Right ventricle myocardium superior (tissue), 1 donor: ENCODE measurements at regions of chr6 and their contacts with region 1.

Region 1: GRCh38 chr6:156564127-156564806 is 212.9 kb upstream of the ARID1B start:
- DNase-seq: peak; percentile 87
- ATAC-seq: peak; percentile 97

Region 2: DNA sequence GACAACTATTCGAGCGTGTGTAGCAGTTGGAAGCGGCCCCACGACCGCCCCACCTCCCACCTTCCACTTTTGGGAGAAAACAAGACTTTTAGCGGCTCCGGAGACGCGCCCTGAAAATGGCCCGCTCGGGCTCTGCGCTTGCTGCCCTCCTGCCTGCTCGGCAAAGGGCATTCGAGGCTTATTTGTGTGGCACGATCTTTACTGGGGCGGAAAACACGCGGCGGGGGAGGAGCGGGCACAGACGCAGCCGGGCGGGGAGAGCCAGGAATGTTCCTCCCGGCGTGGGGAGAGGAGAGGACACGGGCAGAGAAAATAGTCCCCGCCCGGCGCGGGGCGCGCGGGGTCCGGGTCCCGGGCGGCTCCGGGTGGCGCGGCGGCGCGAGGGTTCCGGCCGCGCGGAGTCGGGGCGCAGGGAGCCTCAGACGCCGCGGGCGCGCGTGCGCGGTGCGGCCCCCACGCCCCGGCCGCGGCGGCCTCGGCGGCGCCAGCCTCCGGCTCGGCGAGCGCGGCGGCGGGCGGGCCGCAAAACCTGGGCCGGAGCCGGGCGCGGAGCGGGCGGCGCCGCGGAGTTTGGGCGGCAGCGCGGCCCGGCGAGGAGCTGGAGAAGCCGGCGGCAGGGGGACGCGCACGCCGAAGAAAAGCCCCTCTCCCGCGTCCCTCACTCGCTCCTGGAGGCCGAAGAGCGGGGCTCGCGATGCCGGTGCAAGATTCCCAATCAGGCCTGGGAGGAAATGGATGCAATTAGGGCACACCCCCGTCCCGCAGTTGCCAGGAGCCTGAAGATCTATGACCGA is 122.9 kb after region 1 on chr6:
- intact Hi-C with region 1: loop called (anchors 5 kb)
- DNase-seq: peak; percentile 94
- ATAC-seq: peak; percentile 95

Region 3: GRCh38 chr6:156953479-156954146 is 389.3 kb after region 1 on chr6:
- intact Hi-C with region 1: loop called (anchors 10 kb)
- DNase-seq: no peak
- ATAC-seq: peak; percentile 72